Dorsolateral prefrontal cortex (tissue), 120 donors: ENCODE measurements at regions of chr1 and their contacts with region 1.

Region 1: DNA sequence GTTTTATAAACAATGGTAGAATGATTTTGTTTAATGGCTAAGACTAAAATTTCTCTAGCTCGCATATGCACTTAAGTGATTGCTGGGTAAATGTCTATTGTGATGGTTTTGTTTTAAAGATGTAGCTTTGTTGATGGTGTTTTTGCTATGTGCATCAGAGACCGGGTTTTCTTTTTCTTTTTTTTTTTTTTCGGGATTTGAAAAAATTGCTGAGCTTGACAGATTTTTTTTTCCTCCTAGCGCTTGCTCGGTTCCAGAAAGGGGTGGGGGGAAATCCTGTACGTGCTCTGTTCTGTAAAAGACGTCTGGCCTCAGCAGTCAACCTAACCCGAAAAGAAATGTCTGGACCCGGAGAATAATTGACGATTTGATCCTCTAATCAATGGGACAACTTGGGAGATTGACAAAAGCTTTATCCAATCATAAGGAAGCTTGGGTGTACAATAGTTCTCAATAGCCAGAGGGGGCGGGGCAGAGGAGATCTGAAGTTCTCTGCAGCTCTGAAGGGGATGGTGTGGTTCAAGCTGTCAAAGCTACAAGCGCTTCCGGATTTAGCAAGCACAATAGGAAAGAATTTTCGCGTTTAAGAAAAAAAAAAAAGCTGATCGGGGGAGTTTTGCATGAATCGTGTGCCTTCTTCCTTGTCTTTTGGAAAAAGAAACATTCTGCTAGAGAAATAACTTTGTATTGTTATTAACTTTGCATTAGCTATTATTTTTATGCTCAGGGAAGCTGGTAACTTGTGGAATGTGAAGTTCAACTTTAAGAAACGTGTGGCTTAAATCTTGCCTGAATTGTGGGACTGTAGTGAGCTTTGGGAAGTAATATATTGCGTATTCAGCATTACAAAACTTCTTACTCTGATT is 4.5 kb upstream of the NFIA start:
- DNase-seq: peak; percentile 56 to 90 (median 86)
- H3K4me3 ChIP-seq: peak overlapping the region; percentile 34 to 93 (median 71)
- H3K27ac ChIP-seq: peak overlapping the region; percentile 83 to 99 (median 96)
- H3K27me3 ChIP-seq: no peaks in the 10 kb centered on the region
- CTCF ChIP-seq: peak in 19 of 56 donors; percentile 5 to 51 (median 17)

Region 2: DNA sequence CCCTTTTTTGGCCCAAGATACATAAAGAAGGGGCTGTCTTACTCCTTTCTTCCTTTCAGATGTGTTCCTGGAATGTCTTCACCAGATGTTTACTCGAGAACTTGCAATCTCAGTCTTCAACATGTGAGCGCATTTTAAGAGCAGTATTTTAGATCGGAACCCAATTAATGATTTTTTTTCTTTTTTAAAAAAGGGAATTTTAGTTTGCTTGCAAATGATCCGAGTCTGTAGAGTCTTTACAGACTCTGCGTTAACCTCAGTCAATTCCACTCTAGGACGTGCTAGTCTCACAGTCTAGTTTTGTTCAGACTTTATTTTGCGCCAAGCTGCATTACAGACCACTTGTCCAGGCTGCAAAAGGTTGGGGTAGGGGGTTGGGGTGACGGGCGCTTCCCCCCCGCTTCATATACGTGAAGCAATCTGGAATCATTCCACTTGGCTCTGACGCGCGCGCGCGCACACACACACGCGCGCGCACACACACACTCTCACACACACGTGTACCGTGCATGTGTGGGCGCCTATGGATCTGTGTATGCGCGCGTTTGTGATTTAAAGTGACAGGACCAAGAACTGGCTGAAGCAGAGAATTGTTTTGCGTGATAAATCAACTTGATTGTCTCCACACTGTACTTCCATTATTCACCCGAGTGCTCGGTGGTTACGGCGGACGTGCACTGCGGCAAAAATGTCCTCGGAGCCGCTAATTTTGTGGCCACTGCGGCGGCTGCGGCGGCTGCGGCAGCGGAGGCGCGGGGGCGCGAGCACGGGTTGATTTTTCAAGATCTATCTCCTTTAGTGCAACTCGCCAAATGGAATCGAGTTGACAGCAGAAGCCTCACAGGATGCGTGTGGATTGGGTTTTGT is 21.1 kb before region 1 on chr1:
- intact Hi-C with region 1: loop called (anchors 1 to 2 kb)
- DNase-seq: peak; percentile 40 to 74 (median 64)
- H3K4me3 ChIP-seq: peak overlapping the region; percentile 57 to 92 (median 76)
- H3K27ac ChIP-seq: peak overlapping the region; percentile 73 to 98 (median 93)
- H3K27me3 ChIP-seq: no peaks in the 10 kb centered on the region
- CTCF ChIP-seq: peak in 13 of 56 donors; percentile 3 to 29 (median 13)

Region 3: DNA sequence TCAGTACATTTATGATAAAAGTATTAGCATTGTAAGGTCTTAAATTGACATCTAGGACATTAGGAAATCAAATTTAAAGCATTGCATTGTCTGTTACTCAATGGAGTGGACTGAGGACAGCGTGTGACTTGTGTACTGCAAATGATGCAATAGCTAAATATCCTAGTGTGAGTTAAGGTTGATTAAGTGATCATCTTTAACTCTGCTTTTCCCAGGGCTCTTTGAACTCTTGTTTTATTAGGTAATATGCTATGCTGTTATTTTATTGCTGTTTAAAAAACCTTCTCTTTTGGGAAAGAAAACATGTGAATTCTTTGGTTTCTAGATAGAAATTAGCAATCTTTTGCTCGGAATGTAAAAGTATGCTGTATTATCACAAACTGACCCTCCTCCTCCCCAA is 43.1 kb after region 1 on chr1:
- intact Hi-C with region 1: loop called (anchors 2 to 5 kb)
- DNase-seq: no peak
- H3K4me3 ChIP-seq: peak overlapping the region in 57 of 59 donors; percentile 0 to 62 (median 38)
- H3K27ac ChIP-seq: peak overlapping the region; percentile 19 to 94 (median 86)
- H3K27me3 ChIP-seq: no peaks in the 10 kb centered on the region
- CTCF ChIP-seq: peak in 2 of 56 donors; percentile 9 to 20

Region 4: GRCh38 chr1:61270761-61271411 is 193.0 kb after region 1 on chr1:
- intact Hi-C with region 1: loop called (anchors 10 kb)
- DNase-seq: no peak
- H3K4me3 ChIP-seq: no peak overlapping the region
- H3K27ac ChIP-seq: peak overlapping the region in 53 of 59 donors; percentile 3 to 92 (median 79)
- H3K27me3 ChIP-seq: no peaks in the 10 kb centered on the region
- CTCF ChIP-seq: peak in 16 of 56 donors; percentile 8 to 54 (median 28)